Endothelial cell of umbilical vein (primary cell): ENCODE measurements at regions of chr2 and their contacts with region 1.

Region 1: DNA sequence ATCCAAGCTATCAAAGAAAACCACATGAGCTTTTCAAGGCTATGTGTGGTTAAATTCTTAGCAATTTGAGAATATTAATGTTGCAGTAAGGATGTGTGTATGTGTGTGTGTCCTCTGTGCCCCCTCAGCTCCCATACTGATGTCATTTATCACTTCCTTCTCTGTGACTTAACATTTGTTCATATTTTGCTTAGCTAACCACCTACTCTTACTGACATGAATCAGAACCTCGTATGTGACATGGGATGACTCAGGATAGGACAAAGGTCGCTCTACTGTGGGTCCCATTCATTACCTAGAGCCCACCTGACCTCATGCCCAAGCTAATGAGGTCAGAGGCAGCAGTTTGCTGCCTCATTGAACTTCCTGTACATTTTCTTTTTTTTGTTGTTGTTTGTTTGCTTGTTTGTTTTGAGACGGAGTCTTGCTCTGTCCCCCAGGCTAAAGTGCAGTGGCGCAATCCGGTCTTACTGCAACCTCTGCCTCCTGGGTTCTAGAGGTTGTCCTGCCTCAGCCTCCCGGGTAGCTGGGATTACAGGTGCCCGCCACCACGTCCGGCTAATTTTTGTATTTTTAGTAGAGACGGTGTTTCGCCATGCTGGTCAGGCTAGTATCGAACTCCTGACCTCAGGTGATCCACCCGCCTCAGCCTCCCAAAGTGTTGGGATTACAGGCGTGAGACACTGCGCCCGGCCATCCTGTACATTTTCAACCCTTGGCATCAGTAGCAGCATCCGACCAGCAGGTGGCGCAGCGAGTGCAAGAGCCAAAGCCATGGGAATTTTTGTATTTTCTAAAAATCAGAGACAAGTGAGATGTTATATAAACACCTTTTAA is 36.4 kb downstream of the MOGAT1 start:
- DNase-seq: peak; percentile 75
- H3K4me3 ChIP-seq: no peak overlapping the region
- H3K27ac ChIP-seq: peak overlapping the region; percentile 91
- H3K4me1 ChIP-seq: peaks cover 31% of the 10 kb centered on the region
- H3K27me3 ChIP-seq: no peaks in the 10 kb centered on the region
- CTCF ChIP-seq: peak; percentile 79 to 83
- POLR2A ChIP-seq: no peak

Region 2: DNA sequence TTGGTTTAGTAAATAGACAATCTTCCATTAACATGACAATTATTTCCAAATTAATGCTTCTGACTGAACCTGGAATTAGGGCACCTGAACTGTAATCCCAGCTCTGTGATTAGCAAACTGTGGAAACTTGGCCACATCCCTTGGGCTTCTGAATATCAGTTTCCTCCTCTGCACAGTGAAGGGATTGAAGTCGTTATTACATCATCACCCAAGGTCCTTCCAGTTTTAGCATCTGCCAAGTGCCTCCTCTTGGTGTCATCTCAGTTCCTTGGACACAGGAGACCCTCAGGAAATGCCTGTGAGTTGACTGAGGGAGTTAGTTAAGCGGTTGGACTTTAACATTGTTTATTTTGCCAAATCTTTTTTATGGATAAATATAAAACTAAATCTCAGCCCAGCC is 28.4 kb after region 1 on chr2:
- CTCF ChIA-PET with region 1: interaction called, 10 read pairs
- POLR2A ChIA-PET with region 1: no interaction called
- dilution Hi-C with region 1: no loop called
- intact Hi-C with region 1: no loop called
- DNase-seq: no peak
- H3K4me3 ChIP-seq: no peak overlapping the region
- H3K27ac ChIP-seq: no peak overlapping the region
- H3K4me1 ChIP-seq: peaks cover 15% of the 10 kb centered on the region
- H3K27me3 ChIP-seq: no peaks in the 10 kb centered on the region
- CTCF ChIP-seq: no peak
- POLR2A ChIP-seq: no peak

Region 3: DNA sequence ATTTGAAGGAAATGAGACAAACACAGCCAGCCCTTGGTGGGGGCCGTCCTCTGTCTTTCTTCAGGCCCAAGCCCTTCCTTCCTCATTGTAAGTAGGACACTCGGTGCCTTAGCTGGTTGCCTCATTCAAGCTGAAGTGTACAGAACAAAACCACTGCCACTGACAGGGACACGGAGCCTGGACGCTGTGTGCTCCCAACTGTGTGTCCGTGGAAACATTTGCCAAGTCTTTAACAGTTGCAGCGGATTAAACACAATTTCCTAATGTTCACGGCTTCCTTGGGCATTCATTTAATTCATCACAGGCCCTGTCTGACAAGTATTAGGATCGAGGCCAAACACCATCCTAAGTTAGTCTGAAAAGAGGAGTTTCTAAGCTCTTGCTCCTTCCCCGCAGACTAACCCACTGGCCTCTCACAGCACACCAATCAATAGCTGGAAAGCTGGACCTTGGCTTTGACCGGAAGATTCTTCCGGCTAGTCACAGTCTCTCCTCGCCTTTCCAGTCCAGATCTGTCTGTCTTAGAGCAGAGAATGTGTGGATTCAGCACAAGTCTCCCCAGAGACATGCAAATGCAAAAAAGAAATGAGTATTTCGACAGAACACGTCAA is 84.2 kb after region 1 on chr2:
- CTCF ChIA-PET with region 1: interaction called, 29 read pairs
- POLR2A ChIA-PET with region 1: no interaction called
- dilution Hi-C with region 1: no loop called
- intact Hi-C with region 1: loop called (anchors 1 kb)
- DNase-seq: peak; percentile 64
- H3K4me3 ChIP-seq: no peak overlapping the region
- H3K27ac ChIP-seq: no peak overlapping the region
- H3K4me1 ChIP-seq: peaks cover 11% of the 10 kb centered on the region
- H3K27me3 ChIP-seq: no peaks in the 10 kb centered on the region
- CTCF ChIP-seq: no peak
- POLR2A ChIP-seq: no peak

Region 4: GRCh38 chr2:222844323-222844722 is 136.4 kb after region 1 on chr2:
- CTCF ChIA-PET with region 1: interaction called, 29 read pairs
- POLR2A ChIA-PET with region 1: no interaction called
- dilution Hi-C with region 1: no loop called
- intact Hi-C with region 1: loop called (anchors 1 kb)
- DNase-seq: peak; percentile 55
- H3K4me3 ChIP-seq: no peak overlapping the region
- H3K27ac ChIP-seq: no peak overlapping the region
- H3K4me1 ChIP-seq: peaks cover 22% of the 10 kb centered on the region
- H3K27me3 ChIP-seq: no peaks in the 10 kb centered on the region
- CTCF ChIP-seq: no peak
- POLR2A ChIP-seq: no peak

Region 5: GRCh38 chr2:222892321-222892720 is 184.4 kb after region 1 on chr2:
- CTCF ChIA-PET with region 1: interaction called, 11 read pairs
- POLR2A ChIA-PET with region 1: interaction called, 3 read pairs
- dilution Hi-C with region 1: no loop called
- intact Hi-C with region 1: no loop called
- DNase-seq: peak; percentile 88
- H3K4me3 ChIP-seq: peak overlapping the region in 1 of 3 experiments; percentile 50
- H3K27ac ChIP-seq: peak overlapping the region; percentile 46
- H3K4me1 ChIP-seq: peaks cover 39% of the 10 kb centered on the region
- H3K27me3 ChIP-seq: no peaks in the 10 kb centered on the region
- CTCF ChIP-seq: no peak
- POLR2A ChIP-seq: no peak

Region 6: DNA sequence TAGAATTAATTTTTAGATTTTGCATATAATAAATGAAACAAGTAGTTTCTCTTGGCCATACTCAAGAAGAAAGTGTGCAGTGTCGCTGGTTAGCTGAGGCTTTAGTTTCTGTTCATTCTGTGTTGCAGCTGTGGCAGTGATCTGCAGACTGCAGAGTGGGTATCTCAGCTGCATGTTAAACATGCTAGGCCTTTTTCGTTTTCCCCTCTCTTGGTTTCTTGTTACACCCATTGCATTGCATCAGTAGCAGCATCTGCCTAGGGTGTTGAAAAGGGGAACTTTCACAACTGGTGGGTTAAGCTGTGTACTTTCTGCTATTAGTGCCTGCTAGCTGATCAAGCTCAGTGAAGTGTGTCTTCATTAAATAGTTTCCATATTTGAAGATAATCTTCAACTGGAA is 204.2 kb after region 1 on chr2:
- CTCF ChIA-PET with region 1: interaction called, 10 read pairs
- POLR2A ChIA-PET with region 1: no interaction called
- dilution Hi-C with region 1: no loop called
- intact Hi-C with region 1: no loop called
- DNase-seq: no peak
- H3K4me3 ChIP-seq: no peak overlapping the region
- H3K27ac ChIP-seq: no peak overlapping the region
- H3K4me1 ChIP-seq: no peaks in the 10 kb centered on the region
- H3K27me3 ChIP-seq: no peaks in the 10 kb centered on the region
- CTCF ChIP-seq: no peak
- POLR2A ChIP-seq: no peak

Region 7: GRCh38 chr2:223692191-223692947 is 984.5 kb after region 1 on chr2:
- CTCF ChIA-PET with region 1: no interaction called
- POLR2A ChIA-PET with region 1: no interaction called
- dilution Hi-C with region 1: no loop called
- intact Hi-C with region 1: loop called (anchors 10 kb)
- DNase-seq: peak; percentile 69
- H3K4me3 ChIP-seq: no peak overlapping the region
- H3K27ac ChIP-seq: no peak overlapping the region
- H3K4me1 ChIP-seq: peaks cover 13% of the 10 kb centered on the region
- H3K27me3 ChIP-seq: no peaks in the 10 kb centered on the region
- CTCF ChIP-seq: peak; percentile 64 to 82
- POLR2A ChIP-seq: no peak